ENCODE measurements at regions of chr3 and their contacts with region 1.

Region 1: GRCh38 chr3:187319699-187320302 is 28.3 kb upstream of the MASP1 start:
- DNase-seq: peak; percentile 76
- H3K4me3 Mint-ChIP-seq: no peak overlapping the region
- H3K27ac Mint-ChIP-seq: no peak overlapping the region
- H3K4me1 Mint-ChIP-seq: peaks cover 10% of the 10 kb centered on the region
- H3K27me3 Mint-ChIP-seq: peaks cover 42% of the 10 kb centered on the region

Region 2: DNA sequence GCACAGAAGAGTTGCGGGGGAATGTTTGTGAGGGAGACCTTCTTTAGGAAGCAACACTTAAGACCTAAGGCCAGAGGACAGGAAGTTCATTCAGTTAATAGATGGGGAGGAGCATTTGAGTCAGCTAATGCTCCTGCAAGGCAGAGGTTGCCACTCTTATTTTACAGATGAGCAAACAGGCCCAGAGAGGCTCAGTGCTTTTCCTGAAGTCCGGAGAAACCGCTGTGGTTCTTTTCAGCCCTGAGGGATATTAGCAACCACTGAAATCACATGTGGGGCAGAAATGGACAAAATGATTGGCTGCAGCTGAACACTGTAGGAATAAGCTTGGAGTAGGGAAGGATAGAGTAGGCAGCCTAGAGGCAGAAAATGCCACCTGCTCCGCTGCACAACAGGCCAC is 15.1 kb after region 1 on chr3:
- CTCF ChIA-PET with region 1: interaction called, 28 read pairs
- DNase-seq: no peak
- H3K4me3 Mint-ChIP-seq: no peak overlapping the region
- H3K27ac Mint-ChIP-seq: no peak overlapping the region
- H3K4me1 Mint-ChIP-seq: no peaks in the 10 kb centered on the region
- H3K27me3 Mint-ChIP-seq: peaks cover 22% of the 10 kb centered on the region

Region 3: DNA sequence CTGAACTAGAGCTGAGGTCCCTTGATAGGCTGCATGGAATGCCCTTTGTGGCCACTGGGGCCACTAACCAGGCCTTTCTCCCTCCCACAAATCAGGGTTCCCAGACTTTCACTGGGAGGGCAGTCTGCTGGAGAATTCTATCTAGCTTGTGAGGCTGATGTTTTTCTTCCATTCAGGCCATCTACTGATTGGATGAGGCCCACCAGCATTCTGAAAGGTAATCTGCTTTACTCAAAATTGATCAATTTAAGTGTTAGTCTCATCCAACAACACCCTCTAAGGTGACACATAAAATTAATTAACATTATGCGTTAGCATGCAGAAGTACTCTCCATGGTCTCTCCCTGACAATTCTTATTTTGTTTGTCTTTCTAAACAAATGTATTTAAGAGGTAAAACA is 128.9 kb after region 1 on chr3:
- CTCF ChIA-PET with region 1: interaction called, 10 read pairs
- DNase-seq: no peak
- H3K4me3 Mint-ChIP-seq: no peak overlapping the region
- H3K27ac Mint-ChIP-seq: no peak overlapping the region
- H3K4me1 Mint-ChIP-seq: no peaks in the 10 kb centered on the region
- H3K27me3 Mint-ChIP-seq: peaks cover 13% of the 10 kb centered on the region

Region 4: GRCh38 chr3:187616307-187616972 is 296.6 kb after region 1 on chr3:
- CTCF ChIA-PET with region 1: interaction called, 49 read pairs
- DNase-seq: peak; percentile 74
- H3K4me3 Mint-ChIP-seq: no peak overlapping the region
- H3K27ac Mint-ChIP-seq: no peak overlapping the region
- H3K4me1 Mint-ChIP-seq: no peaks in the 10 kb centered on the region
- H3K27me3 Mint-ChIP-seq: peaks cover 17% of the 10 kb centered on the region

Region 5: GRCh38 chr3:187669675-187670504 is 350.1 kb after region 1 on chr3 and contains the start of gene SST:
- CTCF ChIA-PET with region 1: interaction called, 394 read pairs
- DNase-seq: peak; percentile 65
- H3K4me3 Mint-ChIP-seq: no peak within 1 kb of the TSS
- H3K27ac Mint-ChIP-seq: no peak within 1 kb of the TSS
- H3K4me1 Mint-ChIP-seq: no peaks in the 10 kb centered on the region
- H3K27me3 Mint-ChIP-seq: peaks cover 47% of the 10 kb centered on the region

Region 6: GRCh38 chr3:187714404-187714979 is 394.7 kb after region 1 on chr3:
- CTCF ChIA-PET with region 1: interaction called, 72 read pairs
- DNase-seq: peak; percentile 83
- H3K4me3 Mint-ChIP-seq: no peak overlapping the region
- H3K27ac Mint-ChIP-seq: peak overlapping the region; percentile 26
- H3K4me1 Mint-ChIP-seq: peaks cover 16% of the 10 kb centered on the region
- H3K27me3 Mint-ChIP-seq: peaks cover 4% of the 10 kb centered on the region

Measured in activated naive CD4-positive, alpha-beta T cell treated with anti-CD3 and anti-CD28 coated beads, Interleukin-2, amount 10 ng/mL, durations not matched to agents 7 days and 5 days (primary cell).